K562 (cell line): ENCODE measurements at regions of chr14 and their contacts with region 1.

Region 1: DNA sequence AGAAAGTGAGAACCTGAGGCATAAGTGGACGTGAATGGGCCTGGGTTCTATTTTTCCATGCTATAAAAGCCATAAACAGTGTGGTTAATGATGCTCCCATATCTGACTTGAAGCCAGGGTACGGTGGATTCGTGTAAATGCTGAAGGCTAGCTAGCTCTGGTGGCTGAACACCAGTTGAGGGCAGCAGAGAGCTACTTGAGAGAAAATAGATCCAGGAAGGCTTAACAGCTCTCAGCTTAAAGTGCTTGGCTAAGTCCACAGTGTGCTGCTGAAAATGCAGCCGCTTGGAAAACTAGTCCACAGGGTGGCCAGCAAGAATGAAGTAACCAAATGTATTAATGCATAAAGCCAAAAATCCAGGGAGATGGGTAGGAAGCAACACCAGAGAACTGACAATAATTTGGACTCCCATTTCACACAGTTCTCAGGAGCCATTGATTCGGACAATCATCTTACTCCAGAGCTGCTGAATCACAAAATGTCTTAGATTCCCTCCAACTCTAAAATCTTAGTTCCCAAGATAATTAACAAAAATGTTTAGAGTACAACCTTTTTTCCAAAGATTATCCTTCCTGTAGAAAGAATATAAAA is 15.0 kb upstream of the FOXG1 start:
- DNase-seq: peak in 3 of 4 experiments; percentile 16 to 66 (median 48)
- ATAC-seq: peak; percentile 96
- H3K4me3 ChIP-seq: no peak overlapping the region
- H3K27ac ChIP-seq: no peak overlapping the region
- H3K4me1 ChIP-seq: no peaks in the 10 kb centered on the region
- H3K27me3 ChIP-seq: no peaks in the 10 kb centered on the region
- CTCF ChIP-seq: peak; percentile 57 to 64 (median 61); a peak in 5 of 6 replicates
- EP300 ChIP-seq: no peak
- POLR2A ChIP-seq: no peak
- RAD21 ChIP-seq: peak in 1 of 2 experiments; percentile 59; a peak in 3 of 4 replicates

Region 2: GRCh38 chr14:29016050-29016900 is 264.7 kb after region 1 on chr14:
- CTCF ChIA-PET with region 1: interaction called, 3 read pairs
- POLR2A ChIA-PET with region 1: no interaction called
- in situ Hi-C with region 1: no loop called
- intact Hi-C with region 1: loop called (anchors 10 kb)
- DNase-seq: peak; percentile 7 to 25 (median 12)
- ATAC-seq: peak; percentile 64
- H3K4me3 ChIP-seq: no peak overlapping the region
- H3K27ac ChIP-seq: no peak overlapping the region
- H3K4me1 ChIP-seq: no peaks in the 10 kb centered on the region
- H3K27me3 ChIP-seq: no peaks in the 10 kb centered on the region
- CTCF ChIP-seq: peak; percentile 41 to 67 (median 58)
- EP300 ChIP-seq: no peak
- POLR2A ChIP-seq: no peak
- RAD21 ChIP-seq: peak in 1 of 2 experiments; percentile 43; a peak in 2 of 4 replicates

Region 3: DNA sequence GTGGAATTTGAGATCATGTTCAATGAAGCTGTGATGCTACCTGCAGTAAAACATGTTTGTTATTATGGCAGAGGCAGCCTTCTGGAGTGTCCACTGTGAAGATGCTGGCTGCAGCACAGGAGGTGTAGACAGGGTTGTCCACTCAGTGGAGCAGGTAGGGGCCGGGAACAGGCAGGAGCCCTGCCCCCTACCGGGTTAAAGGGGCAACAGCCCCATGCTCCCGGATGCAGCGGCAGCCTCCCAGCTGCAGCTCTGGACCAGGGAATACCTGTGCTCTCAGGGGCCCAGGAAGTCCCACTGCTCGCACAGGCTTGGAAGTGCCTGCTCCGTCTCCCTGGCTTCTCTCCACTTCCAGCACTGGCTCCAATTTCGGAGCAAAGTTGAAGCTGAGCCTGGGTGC is 416.6 kb after region 1 on chr14:
- CTCF ChIA-PET with region 1: no interaction called
- POLR2A ChIA-PET with region 1: no interaction called
- in situ Hi-C with region 1: no loop called
- intact Hi-C with region 1: loop called (anchors 1 kb)
- DNase-seq: peak; percentile 4 to 17 (median 8)
- ATAC-seq: peak; percentile 83
- H3K4me3 ChIP-seq: no peak overlapping the region
- H3K27ac ChIP-seq: no peak overlapping the region
- H3K4me1 ChIP-seq: no peaks in the 10 kb centered on the region
- H3K27me3 ChIP-seq: no peaks in the 10 kb centered on the region
- CTCF ChIP-seq: peak; percentile 19 to 38 (median 22); a peak in 3 of 6 replicates
- EP300 ChIP-seq: no peak
- POLR2A ChIP-seq: no peak
- RAD21 ChIP-seq: 0 out of 4 replicates have a peak, but pooled peaks of 1 of the 2 experiments have one; percentile 17

Region 4: DNA sequence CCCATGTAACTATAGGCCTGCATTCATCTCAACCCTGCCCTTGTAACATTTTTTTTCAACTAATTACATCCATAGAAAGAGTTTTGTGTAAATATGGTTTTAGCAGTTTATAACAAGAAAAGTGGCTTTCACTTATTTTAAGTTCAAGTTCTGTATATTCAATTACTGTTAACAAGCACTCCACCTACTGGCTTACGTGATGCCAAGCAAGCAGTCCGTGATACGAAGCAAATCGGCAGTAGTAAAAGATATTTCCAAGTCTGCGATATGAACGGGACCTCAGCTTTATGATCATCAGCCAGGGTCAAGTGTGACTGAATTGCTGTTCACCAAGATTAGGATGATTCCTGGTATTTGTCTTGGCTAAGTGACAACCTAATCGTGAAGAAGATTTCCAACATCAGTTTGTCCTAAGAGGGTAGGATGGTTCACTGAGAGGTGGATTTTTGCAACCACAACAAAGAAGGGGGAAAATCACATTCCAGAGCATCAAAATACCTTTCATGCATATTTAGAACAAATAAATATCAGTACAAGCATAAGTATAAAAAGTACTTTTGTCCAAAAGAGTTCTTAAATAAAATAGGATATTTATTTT is 471.2 kb after region 1 on chr14:
- CTCF ChIA-PET with region 1: no interaction called
- POLR2A ChIA-PET with region 1: no interaction called
- in situ Hi-C with region 1: loop called (anchors 25 kb)
- intact Hi-C with region 1: loop called (anchors 1 kb)
- DNase-seq: peak in 1 of 4 experiments; percentile 15
- ATAC-seq: no peak
- H3K4me3 ChIP-seq: no peak overlapping the region
- H3K27ac ChIP-seq: no peak overlapping the region
- H3K4me1 ChIP-seq: no peaks in the 10 kb centered on the region
- H3K27me3 ChIP-seq: no peaks in the 10 kb centered on the region
- CTCF ChIP-seq: peak; percentile 14 to 40 (median 29); a peak in 2 of 6 replicates
- EP300 ChIP-seq: no peak
- POLR2A ChIP-seq: no peak
- RAD21 ChIP-seq: peak; percentile 33 to 49; a peak in 2 of 4 replicates

Region 5: GRCh38 chr14:29518335-29518734 is 766.8 kb after region 1 on chr14:
- CTCF ChIA-PET with region 1: no interaction called
- POLR2A ChIA-PET with region 1: no interaction called
- in situ Hi-C with region 1: no loop called
- intact Hi-C with region 1: loop called (anchors 5 kb)
- DNase-seq: no peak
- ATAC-seq: no peak
- H3K4me3 ChIP-seq: no peak overlapping the region
- H3K27ac ChIP-seq: no peak overlapping the region
- H3K4me1 ChIP-seq: no peaks in the 10 kb centered on the region
- H3K27me3 ChIP-seq: no peaks in the 10 kb centered on the region
- CTCF ChIP-seq: peak in 1 of 3 experiments; percentile 21; a peak in 1 of 6 replicates
- EP300 ChIP-seq: no peak
- POLR2A ChIP-seq: no peak
- RAD21 ChIP-seq: no peak

Region 6: DNA sequence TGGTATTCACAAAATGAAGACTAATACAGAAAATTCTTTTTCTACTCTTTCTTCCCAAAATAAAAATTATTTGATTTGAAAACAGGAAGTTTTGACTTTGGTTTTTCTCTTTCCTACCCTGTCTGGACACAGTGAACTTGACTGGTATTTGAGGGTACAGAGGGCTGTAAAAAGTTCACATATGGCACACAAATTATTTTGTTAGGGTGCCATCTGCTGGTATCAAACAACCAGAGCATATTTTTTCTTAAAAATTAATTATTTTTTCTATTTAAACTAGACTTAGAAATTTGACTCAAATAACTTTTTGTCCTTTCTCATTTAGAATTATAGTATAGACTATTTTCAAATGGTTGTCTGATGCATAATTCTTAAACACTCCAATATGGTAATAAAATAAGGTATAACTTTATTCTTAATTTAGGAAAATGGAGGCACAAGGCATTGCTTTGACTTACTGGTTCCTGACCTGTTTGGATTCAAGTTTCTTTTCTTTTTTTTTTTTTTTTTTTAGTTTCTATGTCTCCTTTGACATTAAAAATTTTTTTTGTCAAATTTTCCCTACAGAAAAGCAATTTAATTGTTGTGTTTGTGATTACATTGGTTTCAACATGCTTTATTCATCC is 785.4 kb after region 1 on chr14:
- CTCF ChIA-PET with region 1: no interaction called
- POLR2A ChIA-PET with region 1: no interaction called
- in situ Hi-C with region 1: loop called (anchors 10 kb)
- intact Hi-C with region 1: loop called (anchors 2 kb)
- DNase-seq: peak in 1 of 4 experiments; percentile 6
- ATAC-seq: no peak
- H3K4me3 ChIP-seq: no peak overlapping the region
- H3K27ac ChIP-seq: no peak overlapping the region
- H3K4me1 ChIP-seq: no peaks in the 10 kb centered on the region
- H3K27me3 ChIP-seq: no peaks in the 10 kb centered on the region; a peak in 1 of 5 replicates
- CTCF ChIP-seq: peak in 2 of 3 experiments; percentile 18 to 48; a peak in 3 of 6 replicates
- EP300 ChIP-seq: no peak
- POLR2A ChIP-seq: no peak
- RAD21 ChIP-seq: peak; percentile 33 to 57; a peak in 3 of 4 replicates

Region 7: GRCh38 chr14:30214461-30215090 is 1463.0 kb after region 1 on chr14:
- CTCF ChIA-PET with region 1: interaction called, 5 read pairs
- POLR2A ChIA-PET with region 1: no interaction called
- in situ Hi-C with region 1: loop called (anchors 25 kb)
- intact Hi-C with region 1: loop called (anchors 2 kb)
- DNase-seq: peak; percentile 7 to 46 (median 16)
- ATAC-seq: peak; percentile 74
- H3K4me3 ChIP-seq: no peak overlapping the region
- H3K27ac ChIP-seq: no peak overlapping the region
- H3K4me1 ChIP-seq: no peaks in the 10 kb centered on the region
- H3K27me3 ChIP-seq: no peaks in the 10 kb centered on the region
- CTCF ChIP-seq: peak; percentile 41 to 66 (median 53); a peak in 5 of 6 replicates
- EP300 ChIP-seq: no peak
- POLR2A ChIP-seq: no peak
- RAD21 ChIP-seq: peak; percentile 58 to 66